MCF 10A (cell line): ENCODE measurements at regions of chrX and their contacts with region 1.

Region 1: GRCh38 chrX:38768079-38768478 is 33.2 kb upstream of the MID1IP1 start:
- DNase-seq: peak; percentile 35
- H3K4me3 Mint-ChIP-seq: no peak overlapping the region
- H3K27ac Mint-ChIP-seq: no peak overlapping the region
- H3K4me1 Mint-ChIP-seq: no peaks in the 10 kb centered on the region
- H3K27me3 Mint-ChIP-seq: peaks cover 40% of the 10 kb centered on the region
- CTCF ChIP-seq: peak; percentile 48

Region 2: GRCh38 chrX:38803586-38804431 is 35.7 kb after region 1 on chrX:
- CTCF ChIA-PET with region 1: interaction called, 3 read pairs
- POLR2A ChIA-PET with region 1: interaction called, 7 read pairs
- intact Hi-C with region 1: loop called (anchors 2 kb)
- DNase-seq: peak; percentile 84
- H3K4me3 Mint-ChIP-seq: peak overlapping the region; percentile 83
- H3K27ac Mint-ChIP-seq: peak overlapping the region; percentile 81
- H3K4me1 Mint-ChIP-seq: peaks cover 3% of the 10 kb centered on the region
- H3K27me3 Mint-ChIP-seq: peaks cover 11% of the 10 kb centered on the region
- CTCF ChIP-seq: no peak